ENCODE measurements at regions of chr16 and their contacts with region 1.

Region 1: GRCh38 chr16:66521951-66522771 is 27.8 kb downstream of the TK2 start:
- DNase-seq: peak; percentile 71 to 96 (median 77)
- H3K4me3 ChIP-seq: peak overlapping the region; percentile 32 to 57
- H3K4me3 Mint-ChIP-seq: peak overlapping the region; percentile 73 to 86 (median 79)
- H3K27ac ChIP-seq: peak overlapping the region; percentile 51
- H3K27ac Mint-ChIP-seq: peak overlapping the region; percentile 89 to 98 (median 95)
- H3K4me1 ChIP-seq: peaks cover 82% of the 10 kb centered on the region
- H3K4me1 Mint-ChIP-seq: peaks cover 64 to 100% (median 82%) of the 10 kb centered on the region in 4 donors
- H3K27me3 ChIP-seq: no peaks in the 10 kb centered on the region
- H3K27me3 Mint-ChIP-seq: no peaks in the 10 kb centered on the region

Region 2: GRCh38 chr16:66444049-66444481 is 78.1 kb before region 1 on chr16:
- CTCF ChIA-PET with region 1: no interaction called
- POLR2A ChIA-PET with region 1: no interaction called
- intact Hi-C with region 1: no loop called
- DNase-seq: no peak
- H3K4me3 ChIP-seq: no peak overlapping the region
- H3K4me3 Mint-ChIP-seq: no peak overlapping the region
- H3K27ac ChIP-seq: no peak overlapping the region
- H3K27ac Mint-ChIP-seq: peak overlapping the region in 2 of 7 donors; percentile 22 to 57
- H3K4me1 ChIP-seq: no peaks in the 10 kb centered on the region
- H3K4me1 Mint-ChIP-seq: no peaks in the 10 kb centered on the region
- H3K27me3 ChIP-seq: no peaks in the 10 kb centered on the region
- H3K27me3 Mint-ChIP-seq: peaks cover 6 to 21% of the 10 kb centered on the region in 2 donors

Region 3: GRCh38 chr16:66483689-66484481 is 38.3 kb before region 1 on chr16:
- CTCF ChIA-PET with region 1: interaction called, 4 read pairs
- POLR2A ChIA-PET with region 1: interaction called, 8 read pairs
- intact Hi-C with region 1: loop called (anchors 2 kb)
- DNase-seq: peak; percentile 60 to 69 (median 64)
- H3K4me3 ChIP-seq: no peak overlapping the region
- H3K4me3 Mint-ChIP-seq: no peak overlapping the region
- H3K27ac ChIP-seq: no peak overlapping the region
- H3K27ac Mint-ChIP-seq: peak overlapping the region in 5 of 7 donors; percentile 27 to 68 (median 61)
- H3K4me1 ChIP-seq: peaks cover 16% of the 10 kb centered on the region
- H3K4me1 Mint-ChIP-seq: peaks cover 10 to 24% (median 13%) of the 10 kb centered on the region in 4 donors
- H3K27me3 ChIP-seq: no peaks in the 10 kb centered on the region
- H3K27me3 Mint-ChIP-seq: no peaks in the 10 kb centered on the region

Region 4: GRCh38 chr16:66511615-66512500 is 10.3 kb before region 1 on chr16:
- CTCF ChIA-PET with region 1: interaction called, 27 read pairs
- POLR2A ChIA-PET with region 1: interaction called, 37 read pairs
- intact Hi-C with region 1: loop called (anchors 1 kb)
- DNase-seq: no peak
- H3K4me3 ChIP-seq: no peak overlapping the region
- H3K4me3 Mint-ChIP-seq: peak overlapping the region in 1 of 8 donors; percentile 50
- H3K27ac ChIP-seq: no peak overlapping the region
- H3K27ac Mint-ChIP-seq: peak overlapping the region in 5 of 7 donors; percentile 13 to 79 (median 30)
- H3K4me1 ChIP-seq: peaks cover 39% of the 10 kb centered on the region
- H3K4me1 Mint-ChIP-seq: peaks cover 23 to 51% (median 32%) of the 10 kb centered on the region in 4 donors
- H3K27me3 ChIP-seq: no peaks in the 10 kb centered on the region
- H3K27me3 Mint-ChIP-seq: no peaks in the 10 kb centered on the region

Region 5: GRCh38 chr16:66539623-66540469 is 17.7 kb after region 1 on chr16:
- CTCF ChIA-PET with region 1: interaction called, 3 read pairs
- POLR2A ChIA-PET with region 1: interaction called, 440 read pairs
- intact Hi-C with region 1: loop called (anchors 2 kb)
- DNase-seq: no peak
- H3K4me3 ChIP-seq: no peak overlapping the region
- H3K4me3 Mint-ChIP-seq: peak overlapping the region in 7 of 8 donors; percentile 5 to 70 (median 40)
- H3K27ac ChIP-seq: no peak overlapping the region
- H3K27ac Mint-ChIP-seq: peak overlapping the region; percentile 25 to 68 (median 62)
- H3K4me1 ChIP-seq: peaks cover 19% of the 10 kb centered on the region
- H3K4me1 Mint-ChIP-seq: peaks cover 9 to 46% (median 20%) of the 10 kb centered on the region in 4 donors
- H3K27me3 ChIP-seq: no peaks in the 10 kb centered on the region
- H3K27me3 Mint-ChIP-seq: no peaks in the 10 kb centered on the region

Region 6: GRCh38 chr16:66547101-66547989 is 25.2 kb after region 1 on chr16:
- CTCF ChIA-PET with region 1: interaction called, 72 read pairs
- POLR2A ChIA-PET with region 1: interaction called, 440 read pairs
- intact Hi-C with region 1: loop called (anchors 1 kb)
- DNase-seq: no peak
- H3K4me3 ChIP-seq: no peak overlapping the region
- H3K4me3 Mint-ChIP-seq: peak overlapping the region in 1 of 8 donors; percentile 40
- H3K27ac ChIP-seq: no peak overlapping the region
- H3K27ac Mint-ChIP-seq: peak overlapping the region; percentile 19 to 97 (median 78)
- H3K4me1 ChIP-seq: peaks cover 47% of the 10 kb centered on the region
- H3K4me1 Mint-ChIP-seq: peaks cover 31 to 46% (median 39%) of the 10 kb centered on the region in 4 donors
- H3K27me3 ChIP-seq: no peaks in the 10 kb centered on the region
- H3K27me3 Mint-ChIP-seq: no peaks in the 10 kb centered on the region

Region 7: GRCh38 chr16:66588981-66589713 is 67.0 kb after region 1 on chr16:
- CTCF ChIA-PET with region 1: interaction called, 5 read pairs
- POLR2A ChIA-PET with region 1: interaction called, 14 read pairs
- intact Hi-C with region 1: no loop called
- DNase-seq: peak; percentile 64 to 74 (median 70)
- H3K4me3 ChIP-seq: no peak overlapping the region
- H3K4me3 Mint-ChIP-seq: peak overlapping the region; percentile 80 to 94 (median 87)
- H3K27ac ChIP-seq: no peak overlapping the region
- H3K27ac Mint-ChIP-seq: peak overlapping the region; percentile 48 to 96 (median 77)
- H3K4me1 ChIP-seq: peaks cover 20% of the 10 kb centered on the region
- H3K4me1 Mint-ChIP-seq: peaks cover 13 to 23% (median 19%) of the 10 kb centered on the region in 4 donors
- H3K27me3 ChIP-seq: no peaks in the 10 kb centered on the region
- H3K27me3 Mint-ChIP-seq: no peaks in the 10 kb centered on the region

Measured in CD4-positive, alpha-beta memory T cell (primary cell).